Activated T-helper 2 cell treated with anti-CD3 and anti-CD28 coated beads, Interferon-gamma antibody, Interleukin-2, Interleukin-4, amounts not matched to agents 10 μg/mL and 5 μg/mL and 100 μg/mL, durations not matched to agents 14 hours and 24 hours and 36 hours (primary cell): ENCODE measurements at regions of chr11 and their contacts with region 1.

Region 1: GRCh38 chr11:59135648-59136461 is 6.8 kb upstream of the FAM111A start:
- DNase-seq: peak; percentile 81
- H3K4me3 Mint-ChIP-seq: peak overlapping the region; percentile 61
- H3K27ac Mint-ChIP-seq: peak overlapping the region; percentile 67
- H3K4me1 Mint-ChIP-seq: peaks cover 15% of the 10 kb centered on the region
- H3K27me3 Mint-ChIP-seq: no peaks in the 10 kb centered on the region

Region 2: DNA sequence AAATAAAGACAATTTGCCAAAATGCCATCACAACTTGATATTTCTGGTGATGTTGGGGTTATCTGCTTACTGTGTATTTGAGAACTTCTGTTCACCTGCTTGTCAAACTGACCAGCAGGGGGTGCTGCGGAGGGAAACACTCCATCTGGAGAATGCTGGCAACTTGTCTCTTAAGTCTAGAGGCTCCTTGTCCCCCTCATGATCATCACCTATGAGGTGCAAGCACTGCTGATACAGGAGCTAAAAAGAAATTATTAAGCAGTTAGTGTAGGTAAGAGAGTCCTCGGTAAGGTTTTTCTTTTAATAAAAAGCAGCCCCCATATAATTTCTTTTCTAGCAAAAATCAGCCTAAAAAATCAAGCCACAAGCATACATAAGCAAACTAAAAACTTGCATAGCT is 82.5 kb before region 1 on chr11:
- intact Hi-C with region 1: loop called (anchors 1 kb)
- DNase-seq: peak; percentile 54
- H3K4me3 Mint-ChIP-seq: no peak overlapping the region
- H3K27ac Mint-ChIP-seq: no peak overlapping the region
- H3K4me1 Mint-ChIP-seq: peaks cover 4% of the 10 kb centered on the region
- H3K27me3 Mint-ChIP-seq: peaks cover 23% of the 10 kb centered on the region

Region 3: GRCh38 chr11:59097113-59097708 is 38.6 kb before region 1 on chr11:
- intact Hi-C with region 1: loop called (anchors 1 kb)
- DNase-seq: peak; percentile 40
- H3K4me3 Mint-ChIP-seq: no peak overlapping the region
- H3K27ac Mint-ChIP-seq: no peak overlapping the region
- H3K4me1 Mint-ChIP-seq: peaks cover 7% of the 10 kb centered on the region
- H3K27me3 Mint-ChIP-seq: peaks cover 15% of the 10 kb centered on the region